A673 (cell line): ENCODE measurements at regions of chr2 and their contacts with region 1.

Region 1: DNA sequence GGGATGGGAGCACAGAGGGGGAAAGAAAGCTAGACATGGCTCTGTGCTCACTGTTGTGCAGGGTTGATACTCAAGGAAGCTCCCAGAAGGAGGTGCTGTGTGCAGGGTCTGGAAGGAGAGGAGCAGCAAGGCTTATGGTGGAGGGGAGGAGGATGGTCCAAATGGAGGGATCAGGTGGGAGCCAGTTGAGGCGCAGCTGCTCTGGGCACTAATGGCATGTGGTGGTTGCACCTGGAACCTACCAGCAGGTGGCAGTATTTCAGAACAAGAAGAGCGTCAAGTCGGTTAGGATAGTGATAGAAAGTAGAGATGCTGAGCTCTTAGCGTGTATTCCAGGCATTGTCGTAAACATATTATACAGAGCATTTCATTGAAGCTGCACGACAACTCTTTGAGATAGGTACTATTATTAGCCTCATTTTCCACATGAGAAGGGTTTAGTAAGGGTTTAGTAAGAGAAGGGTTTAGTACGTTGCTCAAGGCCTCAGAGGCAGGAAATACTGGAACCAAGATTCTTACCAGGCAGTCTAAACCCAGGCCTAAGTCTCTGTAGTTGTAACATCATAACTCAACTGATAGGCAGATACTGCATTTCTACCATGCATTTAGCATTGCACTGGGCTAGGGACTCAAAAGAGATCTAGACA is 223.7 kb downstream of the CYP26B1 start:
- DNase-seq: peak; percentile 82
- H3K4me3 ChIP-seq: no peak overlapping the region
- H3K27ac ChIP-seq: no peak overlapping the region
- H3K4me1 ChIP-seq: no peaks in the 10 kb centered on the region
- H3K27me3 ChIP-seq: no peaks in the 10 kb centered on the region
- CTCF ChIP-seq: peak; percentile 91

Region 2: GRCh38 chr2:71545572-71546274 is 378.3 kb before region 1 on chr2:
- CTCF ChIA-PET with region 1: no interaction called
- POLR2A ChIA-PET with region 1: no interaction called
- intact Hi-C with region 1: loop called (anchors 5 kb)
- DNase-seq: peak; percentile 80
- H3K4me3 ChIP-seq: peak overlapping the region; percentile 25
- H3K27ac ChIP-seq: no peak overlapping the region
- H3K4me1 ChIP-seq: peaks cover 4% of the 10 kb centered on the region
- H3K27me3 ChIP-seq: no peaks in the 10 kb centered on the region
- CTCF ChIP-seq: peak; percentile 84

Region 3: GRCh38 chr2:71882949-71883472 is 41.0 kb before region 1 on chr2:
- CTCF ChIA-PET with region 1: no interaction called
- POLR2A ChIA-PET with region 1: no interaction called
- intact Hi-C with region 1: no loop called
- DNase-seq: peak; percentile 45
- H3K4me3 ChIP-seq: no peak overlapping the region
- H3K27ac ChIP-seq: no peak overlapping the region
- H3K4me1 ChIP-seq: peaks cover 8% of the 10 kb centered on the region
- H3K27me3 ChIP-seq: no peaks in the 10 kb centered on the region
- CTCF ChIP-seq: no peak

Region 4: GRCh38 chr2:71989671-71990070 is 65.7 kb after region 1 on chr2:
- CTCF ChIA-PET with region 1: no interaction called
- POLR2A ChIA-PET with region 1: no interaction called
- intact Hi-C with region 1: loop called (anchors 5 kb)
- DNase-seq: no peak
- H3K4me3 ChIP-seq: no peak overlapping the region
- H3K27ac ChIP-seq: no peak overlapping the region
- H3K4me1 ChIP-seq: no peaks in the 10 kb centered on the region
- H3K27me3 ChIP-seq: no peaks in the 10 kb centered on the region
- CTCF ChIP-seq: no peak

Region 5: GRCh38 chr2:72579591-72580180 is 655.7 kb after region 1 on chr2:
- CTCF ChIA-PET with region 1: interaction called, 5 read pairs
- POLR2A ChIA-PET with region 1: no interaction called
- intact Hi-C with region 1: loop called (anchors 1 kb)
- DNase-seq: peak; percentile 81
- H3K4me3 ChIP-seq: no peak overlapping the region
- H3K27ac ChIP-seq: peak overlapping the region; percentile 10
- H3K4me1 ChIP-seq: peaks cover 48% of the 10 kb centered on the region
- H3K27me3 ChIP-seq: no peaks in the 10 kb centered on the region
- CTCF ChIP-seq: peak; percentile 73